ENCODE measurements at regions of chr1 and their contacts with region 1.

Region 1: GRCh38 chr1:235415008-235415904 is 48.0 kb downstream of the TBCE start:
- DNase-seq: peak; percentile 57
- H3K4me3 ChIP-seq: no peak overlapping the region
- H3K27ac ChIP-seq: no peak overlapping the region
- H3K27me3 ChIP-seq: no peaks in the 10 kb centered on the region
- CTCF ChIP-seq: peak; percentile 78

Region 2: GRCh38 chr1:234963180-234963903 is 451.9 kb before region 1 on chr1:
- CTCF ChIA-PET with region 1: no interaction called
- POLR2A ChIA-PET with region 1: no interaction called
- DNase-seq: peak; percentile 86
- H3K4me3 ChIP-seq: peak overlapping the region; percentile 11; the same call in 1 of the 2 replicates
- H3K27ac ChIP-seq: peak overlapping the region; percentile 98
- H3K27me3 ChIP-seq: no peaks in the 10 kb centered on the region
- CTCF ChIP-seq: no peak

Region 3: DNA sequence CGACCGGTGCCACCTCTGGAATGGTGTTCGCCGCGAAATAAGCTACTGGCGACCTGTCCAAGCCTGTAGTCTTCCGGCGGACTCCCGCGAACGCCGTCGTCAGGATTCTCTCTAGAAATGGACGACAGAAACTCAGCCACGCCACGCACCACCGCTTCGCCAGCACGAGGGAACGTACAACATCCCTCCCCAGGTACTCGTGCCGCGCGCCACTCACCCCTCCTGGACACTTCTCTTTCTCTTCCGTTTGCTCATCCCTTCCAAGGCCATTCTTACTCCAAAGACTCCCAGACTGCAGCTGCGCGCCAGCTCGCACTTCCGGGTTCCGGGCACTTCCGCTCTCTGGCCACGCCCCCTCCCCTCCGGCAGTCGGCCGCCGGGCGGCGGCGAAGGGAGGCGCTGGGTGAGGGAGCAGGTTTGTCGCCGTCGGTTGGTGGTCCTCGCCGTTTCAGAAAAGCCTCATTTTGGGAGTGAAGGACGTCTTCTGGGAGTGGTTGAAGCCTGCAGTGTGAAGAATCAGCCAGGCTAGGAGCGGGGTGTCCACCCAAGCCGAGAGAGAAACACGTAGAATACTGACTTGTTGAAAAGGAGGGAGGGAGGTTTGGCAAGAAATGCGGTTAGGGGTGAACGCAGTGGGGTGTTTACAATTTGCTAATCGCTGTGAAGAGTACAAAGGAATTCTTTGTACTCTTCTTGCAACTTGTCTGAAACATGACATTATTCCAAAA is 254.1 kb before region 1 on chr1 and contains the start of gene RBM34:
- CTCF ChIA-PET with region 1: interaction called, 16 read pairs
- POLR2A ChIA-PET with region 1: interaction called, 4 read pairs
- DNase-seq: peak; percentile 74
- H3K4me3 ChIP-seq: peak within 1 kb of the TSS; percentile 97
- H3K27ac ChIP-seq: peak within 1 kb of the TSS; percentile 82
- H3K27me3 ChIP-seq: no peaks in the 10 kb centered on the region
- CTCF ChIP-seq: peak; percentile 26
- polyA plus RNA-seq, gene RBM34: 32.3 and 47.0 TPM in 2 replicates

Region 4: GRCh38 chr1:235225299-235225698 is 190.0 kb before region 1 on chr1:
- CTCF ChIA-PET with region 1: interaction called, 12 read pairs
- POLR2A ChIA-PET with region 1: no interaction called
- DNase-seq: no peak
- H3K4me3 ChIP-seq: no peak overlapping the region
- H3K27ac ChIP-seq: no peak overlapping the region
- H3K27me3 ChIP-seq: no peaks in the 10 kb centered on the region
- CTCF ChIP-seq: no peak

Region 5: GRCh38 chr1:235253219-235253962 is 161.9 kb before region 1 on chr1:
- CTCF ChIA-PET with region 1: interaction called, 68 read pairs
- POLR2A ChIA-PET with region 1: interaction called, 4 read pairs
- DNase-seq: peak; percentile 41
- H3K4me3 ChIP-seq: no peak overlapping the region
- H3K27ac ChIP-seq: no peak overlapping the region
- H3K27me3 ChIP-seq: no peaks in the 10 kb centered on the region
- CTCF ChIP-seq: peak; percentile 96

Region 6: DNA sequence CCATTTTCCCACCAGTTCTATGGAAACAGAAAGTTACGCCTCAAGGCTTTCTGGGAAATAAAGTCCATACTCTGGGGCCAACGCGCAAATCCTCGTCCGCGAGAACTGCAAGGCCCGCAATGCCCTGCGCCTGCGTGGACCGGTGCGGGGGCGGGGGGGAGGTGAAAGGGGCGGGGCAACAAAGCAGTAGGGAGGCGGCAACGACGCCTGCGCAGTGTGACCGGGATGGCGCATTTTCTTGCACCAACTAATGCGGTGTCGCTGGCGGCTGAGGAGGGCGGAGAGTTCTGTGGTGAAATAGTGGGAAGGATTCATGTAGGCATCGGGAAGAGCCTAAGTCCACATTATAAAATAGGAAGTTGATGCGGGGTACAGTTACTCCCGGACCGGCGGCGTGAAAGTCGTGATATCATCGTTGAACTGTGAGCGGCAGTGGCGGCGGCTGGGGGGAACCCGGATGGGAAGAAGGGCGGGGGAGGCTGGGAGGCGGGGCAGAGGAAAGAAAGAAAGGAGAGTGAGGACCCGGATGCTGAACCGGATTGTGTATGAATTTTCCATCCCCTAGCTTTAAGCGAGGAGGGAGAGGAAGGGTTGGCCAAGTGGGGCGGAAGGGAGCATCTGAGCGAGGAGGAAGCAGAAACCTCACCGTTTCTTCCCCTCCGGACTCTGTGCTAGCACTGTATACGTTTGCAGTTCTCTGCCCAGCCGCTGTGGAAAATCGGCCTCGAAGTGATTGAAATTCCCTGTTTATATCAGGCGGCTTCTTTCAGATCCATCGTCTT is 86.7 kb before region 1 on chr1 and contains the start of gene GGPS1:
- CTCF ChIA-PET with region 1: interaction called, 35 read pairs
- POLR2A ChIA-PET with region 1: interaction called, 6 read pairs
- DNase-seq: peak; percentile 100
- H3K4me3 ChIP-seq: peak within 1 kb of the TSS; percentile 90
- H3K27ac ChIP-seq: peak within 1 kb of the TSS; percentile 96
- H3K27me3 ChIP-seq: no peaks in the 10 kb centered on the region
- CTCF ChIP-seq: peak; percentile 44
- polyA plus RNA-seq, gene GGPS1: 37.4 and 45.2 TPM in 2 replicates

Region 7: DNA sequence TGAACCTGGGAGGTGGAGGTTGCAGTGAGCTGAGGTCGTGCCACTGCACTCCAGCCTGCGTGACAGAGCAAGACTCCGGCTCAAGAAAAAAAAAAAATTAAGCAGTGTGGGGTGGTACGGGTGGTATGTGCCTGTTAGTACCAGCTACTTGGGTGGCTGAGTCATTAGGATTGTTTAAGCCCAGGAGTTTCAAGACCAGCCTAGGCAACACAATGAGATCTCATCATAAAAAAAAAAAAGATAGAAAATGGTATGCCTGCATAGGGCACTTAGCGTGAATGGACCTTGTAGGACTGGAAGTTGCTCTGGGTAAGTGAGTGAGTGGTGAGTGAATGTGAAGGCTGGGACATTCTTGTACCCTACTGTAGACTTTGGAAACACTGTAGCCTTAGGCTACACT is 11.1 kb before region 1 on chr1:
- CTCF ChIA-PET with region 1: interaction called, 46 read pairs
- POLR2A ChIA-PET with region 1: no interaction called
- DNase-seq: no peak
- H3K4me3 ChIP-seq: no peak overlapping the region
- H3K27ac ChIP-seq: no peak overlapping the region
- H3K27me3 ChIP-seq: no peaks in the 10 kb centered on the region
- CTCF ChIP-seq: no peak

Measured in AG04450 (cell line).